PC-9 (cell line): ENCODE measurements at regions of chr9 and their contacts with region 1.

Region 1: GRCh38 chr9:112793213-112793810 is 42.8 kb downstream of the SNX30 start:
- DNase-seq: peak in 1 of 2 experiments; percentile 71
- H3K4me3 ChIP-seq: no peak overlapping the region
- H3K27ac ChIP-seq: no peak overlapping the region
- H3K4me1 ChIP-seq: no peaks in the 10 kb centered on the region
- H3K27me3 ChIP-seq: no peaks in the 10 kb centered on the region
- CTCF ChIP-seq: peak; percentile 78

Region 2: GRCh38 chr9:112443200-112443599 is 350.1 kb before region 1 on chr9:
- CTCF ChIA-PET with region 1: no interaction called
- POLR2A ChIA-PET with region 1: no interaction called
- intact Hi-C with region 1: loop called (anchors 10 kb)
- DNase-seq: no peak
- H3K4me3 ChIP-seq: no peak overlapping the region
- H3K27ac ChIP-seq: no peak overlapping the region
- H3K4me1 ChIP-seq: no peaks in the 10 kb centered on the region
- H3K27me3 ChIP-seq: no peaks in the 10 kb centered on the region
- CTCF ChIP-seq: 0 out of 2 replicates have a peak, but pooled peaks have one; percentile 47

Region 3: GRCh38 chr9:112971415-112971814 is 178.1 kb after region 1 on chr9:
- CTCF ChIA-PET with region 1: no interaction called
- POLR2A ChIA-PET with region 1: no interaction called
- intact Hi-C with region 1: no loop called
- DNase-seq: peak in 1 of 2 experiments; percentile 13
- H3K4me3 ChIP-seq: no peak overlapping the region
- H3K27ac ChIP-seq: no peak overlapping the region
- H3K4me1 ChIP-seq: no peaks in the 10 kb centered on the region
- H3K27me3 ChIP-seq: no peaks in the 10 kb centered on the region; the same call in 1 of the 2 replicates
- CTCF ChIP-seq: peak; percentile 42; the same call in 1 of the 2 replicates